Kidney (tissue), 22 donors: ENCODE measurements at regions of chr11 and their contacts with region 1.

Region 1: DNA sequence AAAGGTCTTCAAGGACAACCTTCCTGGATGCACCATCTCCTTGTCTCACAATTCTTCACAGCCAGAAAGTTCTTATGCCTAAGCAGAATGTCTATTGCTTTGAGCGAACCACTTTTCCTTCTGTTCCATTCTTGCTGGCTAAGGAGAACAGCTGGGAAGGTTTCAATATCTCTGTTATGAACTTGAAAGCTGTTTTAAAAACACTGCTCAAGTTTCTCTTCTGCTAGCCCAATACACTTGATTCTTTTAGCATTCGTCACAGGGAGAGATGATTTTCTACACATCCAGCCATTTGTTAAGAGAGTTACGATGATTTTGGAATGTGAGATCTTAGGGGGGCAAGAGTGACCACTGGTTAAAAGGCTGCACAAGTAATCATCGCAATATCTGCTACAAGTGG is 249.3 kb downstream of the KIRREL3 start:
- DNase-seq: no peak
- H3K4me3 ChIP-seq: no peak overlapping the region
- H3K27ac ChIP-seq: no peak overlapping the region
- H3K4me1 ChIP-seq: peaks cover 0 to 5% (median 5%) of the 10 kb centered on the region in 3 donors
- H3K27me3 ChIP-seq: no peaks in the 10 kb centered on the region
- CTCF ChIP-seq: no peak

Region 2: DNA sequence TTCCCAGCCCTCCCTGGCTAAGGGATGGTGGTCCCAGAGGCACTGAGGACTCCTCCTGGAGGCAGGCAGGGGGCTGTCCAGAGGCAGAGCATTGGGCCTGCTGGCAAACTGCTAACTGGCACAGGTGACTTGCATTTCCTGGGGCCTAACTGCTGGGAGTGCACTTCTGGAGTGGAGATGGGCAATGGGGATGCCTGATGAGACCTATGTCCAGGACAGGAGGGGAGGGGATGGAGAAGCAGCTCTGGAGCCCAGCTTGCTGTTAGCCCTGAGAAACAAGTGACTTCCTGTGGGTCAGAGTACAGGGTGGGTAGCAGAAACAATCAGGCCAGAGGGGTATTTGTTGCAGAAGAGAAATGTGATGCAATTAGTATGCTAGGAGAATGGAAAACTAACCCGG is 142.6 kb before region 1 on chr11:
- intact Hi-C with region 1: no loop called
- DNase-seq: peak in 3 of 5 donors; percentile 55 to 63 (median 57)
- H3K4me3 ChIP-seq: no peak overlapping the region
- H3K27ac ChIP-seq: no peak overlapping the region
- H3K4me1 ChIP-seq: peaks cover 0 to 5% (median 3%) of the 10 kb centered on the region in 3 donors
- H3K27me3 ChIP-seq: no peaks in the 10 kb centered on the region
- CTCF ChIP-seq: no peak

Region 3: DNA sequence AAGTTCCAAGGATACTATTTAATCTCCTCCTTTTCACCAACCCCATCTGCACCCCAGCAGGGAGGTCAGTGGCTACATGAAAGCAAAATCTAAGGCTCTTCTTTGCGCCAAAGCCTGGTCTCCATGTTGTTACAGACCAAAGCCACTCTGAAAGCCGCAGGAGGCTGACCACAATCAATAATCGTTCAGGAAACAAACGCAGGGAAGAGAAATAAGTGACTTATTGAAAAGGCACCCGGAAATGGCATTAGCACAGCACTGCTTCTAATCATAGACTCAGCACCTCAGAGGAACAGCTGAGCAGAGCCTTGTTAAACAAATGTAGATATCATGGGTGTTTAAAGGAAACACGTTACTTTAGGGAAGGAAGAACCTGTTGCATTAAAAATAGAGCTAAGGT is 65.4 kb after region 1 on chr11:
- intact Hi-C with region 1: loop called (anchors 10 kb)
- DNase-seq: no peak
- H3K4me3 ChIP-seq: no peak overlapping the region
- H3K27ac ChIP-seq: no peak overlapping the region
- H3K4me1 ChIP-seq: no peaks in the 10 kb centered on the region
- H3K27me3 ChIP-seq: no peaks in the 10 kb centered on the region
- CTCF ChIP-seq: no peak

Region 4: DNA sequence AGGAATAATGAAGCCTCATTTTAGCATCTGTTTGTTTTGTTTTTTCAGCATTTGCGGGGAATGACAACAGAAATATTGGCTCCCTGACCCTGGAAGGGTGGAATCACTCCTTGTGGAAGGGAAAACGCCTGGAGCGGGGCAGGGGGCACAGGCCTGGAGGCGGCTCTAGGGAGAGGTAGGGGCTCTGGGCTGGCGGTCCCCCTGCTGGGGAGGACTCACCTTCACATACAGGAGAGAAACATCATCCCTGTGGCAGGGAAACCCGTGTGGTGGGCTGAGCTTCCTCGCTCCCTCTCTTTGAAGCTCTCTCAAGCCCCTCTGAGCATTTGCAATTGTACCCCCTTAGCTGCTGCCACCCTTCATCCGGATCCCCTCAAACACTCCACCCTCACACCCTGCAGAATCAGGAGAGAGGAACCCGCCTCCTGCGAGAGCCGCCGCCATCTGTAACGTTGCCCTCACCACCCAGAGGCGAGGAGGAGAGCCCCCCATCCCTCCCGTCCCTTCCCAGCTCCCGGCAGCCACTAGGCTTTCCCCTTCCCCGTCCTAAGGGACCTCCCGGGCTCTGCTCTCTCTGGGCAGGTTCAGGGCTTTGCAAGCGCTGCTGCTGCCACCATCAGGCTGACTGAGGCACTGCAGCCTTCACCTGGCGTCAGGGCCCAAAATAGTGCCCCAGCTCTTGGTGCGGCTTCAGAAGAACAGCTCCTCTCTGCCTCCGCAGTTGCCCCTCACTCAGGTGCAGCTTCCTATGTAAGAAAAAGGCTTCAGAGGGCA is 238.9 kb after region 1 on chr11:
- intact Hi-C with region 1: no loop called
- DNase-seq: peak; percentile 85 to 91 (median 88)
- H3K4me3 ChIP-seq: no peak overlapping the region
- H3K27ac ChIP-seq: no peak overlapping the region
- H3K4me1 ChIP-seq: no peaks in the 10 kb centered on the region
- H3K27me3 ChIP-seq: no peaks in the 10 kb centered on the region
- CTCF ChIP-seq: peak; percentile 94